ENCODE measurements at regions of chr6 and their contacts with region 1.

Region 1: DNA sequence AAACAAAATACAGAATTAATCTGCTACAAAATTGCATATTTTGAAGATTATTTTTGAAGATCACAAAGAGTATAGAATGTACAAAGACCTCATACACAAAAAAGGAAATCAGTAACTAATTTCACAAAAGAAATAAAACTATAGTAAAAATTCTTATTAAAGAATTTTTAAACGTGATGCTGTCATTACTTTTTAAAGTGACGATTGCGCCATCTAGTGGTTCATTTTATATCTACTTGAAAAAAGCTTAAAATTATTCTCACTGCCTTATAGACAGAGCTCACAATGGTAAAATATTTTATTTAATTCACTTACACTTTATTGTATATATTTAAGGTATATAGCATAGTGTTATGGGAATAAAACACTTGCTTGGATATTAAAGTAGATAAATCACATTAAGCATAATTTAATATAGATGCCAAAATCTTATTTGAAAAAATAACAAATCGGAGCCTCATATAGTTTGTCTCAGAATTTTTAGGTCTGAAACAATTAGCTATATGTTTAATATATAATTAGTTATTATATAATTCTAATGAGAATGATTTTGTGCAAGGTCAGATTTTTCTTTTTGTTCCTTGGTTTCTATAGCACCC is 128.8 kb downstream of the PHF3 start:
- DNase-seq: peak; percentile 52
- H3K4me3 ChIP-seq: no peak overlapping the region
- H3K27ac ChIP-seq: no peak overlapping the region
- H3K4me1 ChIP-seq: no peaks in the 10 kb centered on the region
- H3K27me3 ChIP-seq: peaks cover 0 to 9% of the 10 kb centered on the region in 2 experiments
- CTCF ChIP-seq: peak in 1 of 2 donors; percentile 19
- POLR2A ChIP-seq: no peak

Region 2: DNA sequence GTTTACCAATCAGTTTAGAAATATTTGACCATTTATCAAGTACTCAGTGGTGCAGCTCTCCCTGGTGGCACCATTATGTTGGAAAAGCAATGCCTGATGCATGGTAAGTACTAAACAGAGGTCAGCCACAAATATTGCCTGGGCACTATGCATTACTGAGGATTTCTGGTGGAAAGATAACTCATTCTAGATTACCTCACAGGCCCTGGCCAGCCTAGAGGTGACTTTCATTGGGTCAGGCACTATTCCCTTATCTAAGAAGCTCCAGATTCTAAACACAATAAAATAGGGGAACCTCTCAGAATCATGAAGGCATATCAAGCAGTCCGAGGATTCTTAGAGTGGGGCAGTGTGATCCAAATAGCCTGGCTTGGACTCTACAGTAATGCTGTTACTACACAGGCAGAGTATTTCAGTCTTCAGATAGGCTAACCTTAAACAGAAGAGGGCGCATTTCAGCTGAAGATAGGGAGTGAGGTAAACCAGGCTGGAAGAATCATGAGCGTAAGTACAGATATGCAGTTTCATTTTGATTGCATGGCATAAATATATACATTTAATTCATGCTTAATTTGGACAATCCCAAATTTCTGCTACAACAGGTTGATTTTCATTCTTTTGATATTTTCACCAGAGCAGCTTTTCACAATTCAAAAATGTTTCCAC is 456.7 kb before region 1 on chr6:
- CTCF ChIA-PET with region 1: interaction called, 22 read pairs
- POLR2A ChIA-PET with region 1: no interaction called
- dilution Hi-C with region 1: no loop called
- intact Hi-C with region 1: loop called (anchors 1 kb)
- DNase-seq: peak; percentile 53
- H3K4me3 ChIP-seq: peak overlapping the region in 1 of 3 experiments; percentile 11
- H3K27ac ChIP-seq: no peak overlapping the region
- H3K4me1 ChIP-seq: no peaks in the 10 kb centered on the region
- H3K27me3 ChIP-seq: no peaks in the 10 kb centered on the region
- CTCF ChIP-seq: peak; percentile 32 to 40
- POLR2A ChIP-seq: no peak

Region 3: GRCh38 chr6:63352587-63353285 is 411.7 kb before region 1 on chr6:
- CTCF ChIA-PET with region 1: interaction called, 101 read pairs
- POLR2A ChIA-PET with region 1: no interaction called
- dilution Hi-C with region 1: no loop called
- intact Hi-C with region 1: loop called (anchors 1 kb)
- DNase-seq: peak; percentile 27
- H3K4me3 ChIP-seq: no peak overlapping the region
- H3K27ac ChIP-seq: no peak overlapping the region
- H3K4me1 ChIP-seq: peaks cover 26% of the 10 kb centered on the region
- H3K27me3 ChIP-seq: no peaks in the 10 kb centered on the region
- CTCF ChIP-seq: peak in 1 of 2 donors; percentile 17
- POLR2A ChIP-seq: no peak

Region 4: GRCh38 chr6:63598049-63599036 is 166.1 kb before region 1 on chr6:
- CTCF ChIA-PET with region 1: interaction called, 94 read pairs
- POLR2A ChIA-PET with region 1: no interaction called
- dilution Hi-C with region 1: no loop called
- intact Hi-C with region 1: loop called (anchors 1 kb)
- DNase-seq: peak; percentile 73
- H3K4me3 ChIP-seq: peak overlapping the region; percentile 12 to 63 (median 42)
- H3K27ac ChIP-seq: no peak overlapping the region
- H3K4me1 ChIP-seq: peaks cover 2% of the 10 kb centered on the region
- H3K27me3 ChIP-seq: peaks cover 0 to 2% of the 10 kb centered on the region in 2 experiments
- CTCF ChIP-seq: peak; percentile 79 to 83
- POLR2A ChIP-seq: no peak

Region 5: GRCh38 chr6:63750400-63750799 is 14.0 kb before region 1 on chr6:
- CTCF ChIA-PET with region 1: interaction called, 10 read pairs
- POLR2A ChIA-PET with region 1: interaction called, 4 read pairs
- dilution Hi-C with region 1: no loop called
- intact Hi-C with region 1: no loop called
- DNase-seq: no peak
- H3K4me3 ChIP-seq: no peak overlapping the region
- H3K27ac ChIP-seq: no peak overlapping the region
- H3K4me1 ChIP-seq: no peaks in the 10 kb centered on the region
- H3K27me3 ChIP-seq: no peaks in the 10 kb centered on the region
- CTCF ChIP-seq: no peak
- POLR2A ChIP-seq: no peak

Region 6: DNA sequence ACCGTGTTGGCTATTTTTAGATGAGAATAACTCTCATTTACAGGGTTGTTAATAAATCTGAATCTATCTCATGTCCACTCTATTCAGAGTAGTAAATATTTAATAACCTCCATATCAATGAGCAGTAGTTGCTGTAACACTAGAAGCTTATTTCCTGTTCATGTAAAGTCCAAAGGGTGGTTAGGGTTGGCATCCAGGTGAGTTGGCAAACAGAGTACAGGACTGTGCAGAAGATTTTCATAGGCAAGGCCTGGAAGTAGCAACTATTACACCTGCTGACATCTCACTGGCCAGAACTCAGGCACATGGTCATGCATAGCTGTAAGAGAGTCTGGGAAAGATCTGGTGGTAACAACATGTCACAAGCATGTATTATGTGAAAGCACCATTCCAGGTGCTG is 18.7 kb after region 1 on chr6:
- CTCF ChIA-PET with region 1: interaction called, 11 read pairs
- POLR2A ChIA-PET with region 1: no interaction called
- dilution Hi-C with region 1: no loop called
- intact Hi-C with region 1: no loop called
- DNase-seq: no peak
- H3K4me3 ChIP-seq: no peak overlapping the region
- H3K27ac ChIP-seq: no peak overlapping the region
- H3K4me1 ChIP-seq: no peaks in the 10 kb centered on the region
- H3K27me3 ChIP-seq: no peaks in the 10 kb centered on the region
- CTCF ChIP-seq: no peak
- POLR2A ChIP-seq: no peak

Region 7: DNA sequence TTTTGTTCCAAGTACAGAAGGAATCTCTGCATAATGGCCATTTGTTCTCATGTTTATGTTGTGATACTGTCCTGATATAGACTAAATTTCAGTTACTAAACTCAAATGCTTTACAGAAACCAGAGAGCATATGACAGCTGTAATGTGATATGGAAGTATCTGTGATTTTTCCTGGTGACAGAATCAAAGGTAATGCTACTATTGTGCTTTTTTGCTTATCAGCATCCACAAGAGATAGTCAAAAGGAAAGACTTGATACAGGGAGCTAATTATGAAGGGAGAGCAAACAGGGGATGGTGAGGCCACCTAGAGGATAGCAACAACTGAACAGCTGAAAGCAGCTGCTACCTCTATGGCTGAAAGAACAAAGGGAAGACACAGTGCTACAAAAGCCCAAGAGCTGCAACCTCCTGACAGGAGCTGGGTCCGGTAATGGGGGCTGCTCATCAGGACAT is 52.6 kb after region 1 on chr6:
- CTCF ChIA-PET with region 1: interaction called, 12 read pairs
- POLR2A ChIA-PET with region 1: no interaction called
- dilution Hi-C with region 1: no loop called
- intact Hi-C with region 1: no loop called
- DNase-seq: no peak
- H3K4me3 ChIP-seq: no peak overlapping the region
- H3K27ac ChIP-seq: no peak overlapping the region
- H3K4me1 ChIP-seq: no peaks in the 10 kb centered on the region
- H3K27me3 ChIP-seq: peaks cover 0 to 3% of the 10 kb centered on the region in 2 experiments
- CTCF ChIP-seq: peak in 1 of 2 donors; percentile 11
- POLR2A ChIP-seq: no peak

Measured in endothelial cell of umbilical vein (primary cell).